Prostate gland (tissue), 2 donors: ENCODE measurements at regions of chr13 and their contacts with region 1.

Region 1: DNA sequence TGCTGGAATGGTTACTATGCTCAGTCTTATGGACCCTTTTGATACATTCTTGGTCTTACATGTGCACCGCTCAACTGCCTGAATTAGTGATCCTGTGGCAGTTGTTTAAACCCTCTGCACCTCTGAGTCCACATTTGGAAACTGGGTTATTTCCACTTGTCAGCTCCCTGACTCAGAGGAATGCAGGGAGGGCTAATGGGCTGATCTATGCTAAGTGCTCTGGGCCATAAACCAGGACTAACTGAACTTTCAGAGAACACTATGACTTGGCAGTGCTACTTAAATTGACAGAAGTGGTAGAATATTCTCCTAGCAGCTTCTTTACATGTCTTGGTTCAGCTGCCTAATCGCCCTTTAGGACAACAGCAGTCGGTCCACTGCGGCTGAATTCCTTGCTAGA is 26.8 kb upstream of the MED4 start:
- DNase-seq: no peak
- H3K4me3 ChIP-seq: no peak overlapping the region
- H3K27ac ChIP-seq: no peak overlapping the region
- H3K4me1 ChIP-seq: peaks cover 9% of the 10 kb centered on the region
- H3K27me3 ChIP-seq: no peaks in the 10 kb centered on the region
- CTCF ChIP-seq: no peak
- POLR2A ChIP-seq: no peak

Region 2: GRCh38 chr13:48094781-48095502 is 26.8 kb before region 1 on chr13 and contains the start of gene MED4:
- intact Hi-C with region 1: loop called (anchors 2 kb)
- DNase-seq: peak; percentile 91
- H3K4me3 ChIP-seq: peak within 1 kb of the TSS; percentile 96 to 97
- H3K27ac ChIP-seq: peak within 1 kb of the TSS; percentile 77 to 83
- H3K4me1 ChIP-seq: no peaks in the 10 kb centered on the region
- H3K27me3 ChIP-seq: no peaks in the 10 kb centered on the region
- CTCF ChIP-seq: peak; percentile 97 to 99 (median 99)
- POLR2A ChIP-seq: peak; percentile 70
- total RNA-seq, gene MED4: 33.9 to 36.4 TPM